ENCODE measurements at regions of chr13 and their contacts with region 1.

Region 1: DNA sequence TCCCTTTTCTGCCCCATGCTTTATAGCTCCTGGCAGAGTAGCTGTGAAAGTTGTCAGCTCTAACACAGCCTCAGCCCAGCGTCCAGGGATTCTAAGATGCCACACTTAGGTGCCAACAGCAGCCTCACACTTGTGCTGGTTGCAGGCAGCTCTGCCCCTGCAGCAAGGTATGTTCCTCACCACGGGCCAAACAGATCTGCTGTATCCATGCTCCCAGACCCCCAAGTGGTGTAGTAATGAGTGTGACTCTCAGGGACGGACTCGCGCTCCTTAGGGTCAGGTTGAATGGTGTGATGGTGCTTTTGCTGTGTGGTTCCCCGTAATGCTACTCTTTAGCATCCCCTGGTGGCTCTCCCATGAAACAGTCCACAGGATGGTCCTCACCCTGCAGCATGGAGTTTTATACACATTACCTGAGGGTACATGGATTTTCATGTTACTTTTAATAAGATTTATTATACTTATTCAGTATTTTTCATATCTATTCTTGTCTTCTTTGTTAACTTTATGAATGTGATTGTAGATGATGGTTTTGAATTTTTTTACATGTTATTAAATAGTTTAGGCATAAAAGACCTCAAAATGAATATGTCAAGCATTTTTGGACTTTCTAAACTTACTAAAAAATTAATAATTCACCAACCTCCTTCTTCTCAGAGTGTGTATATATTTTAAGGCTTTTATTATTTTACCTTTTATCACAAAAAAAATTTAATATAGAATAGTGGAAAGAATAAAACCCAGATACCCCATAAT is 232.5 kb downstream of the SLC7A1 start:
- DNase-seq: peak in 10 of 14 experiments; percentile 4 to 64 (median 14)
- ATAC-seq: peak; percentile 79
- H3K4me3 ChIP-seq: no peak overlapping the region
- H3K4me3 Mint-ChIP-seq: no peak overlapping the region
- H3K27ac ChIP-seq: no peak overlapping the region
- H3K27ac Mint-ChIP-seq: no peak overlapping the region
- H3K4me1 ChIP-seq: peaks cover 5% of the 10 kb centered on the region
- H3K4me1 Mint-ChIP-seq: no peaks in the 10 kb centered on the region
- H3K27me3 ChIP-seq: no peaks in the 10 kb centered on the region
- H3K27me3 Mint-ChIP-seq: peaks cover 22% of the 10 kb centered on the region
- CTCF ChIP-seq: peak; percentile 71

Region 2: DNA sequence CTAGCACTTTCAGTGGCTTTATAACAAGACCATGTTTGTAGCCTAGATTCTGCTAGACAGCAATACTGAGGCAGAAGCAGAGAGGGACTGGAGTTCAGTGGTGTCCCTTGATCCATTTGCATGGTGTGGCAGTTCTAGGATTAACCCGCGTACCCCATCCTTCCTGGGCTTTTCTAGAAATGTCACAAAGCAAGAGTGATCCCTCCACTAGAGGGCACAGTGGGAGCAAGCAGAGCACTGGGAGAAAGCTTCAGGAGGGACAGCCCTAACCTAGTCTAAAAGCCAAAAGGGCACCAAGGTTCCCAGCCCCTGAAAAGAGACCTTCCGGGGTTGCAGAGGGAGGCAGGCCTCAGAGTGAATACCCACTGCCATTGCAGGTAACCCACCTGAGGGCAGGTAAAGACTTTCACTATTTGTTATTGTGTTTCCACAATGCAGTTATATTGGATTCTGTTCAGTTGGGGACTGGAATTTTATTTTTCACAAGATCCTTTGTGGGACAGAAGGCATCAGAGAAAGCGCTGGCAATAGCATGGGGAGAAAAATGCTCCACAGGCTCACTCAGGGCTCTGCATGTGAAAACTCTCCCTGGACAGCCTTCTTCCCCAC is 1038.7 kb before region 1 on chr13:
- CTCF ChIA-PET with region 1: no interaction called
- POLR2A ChIA-PET with region 1: no interaction called
- intact Hi-C with region 1: loop called in 1 of 2 experiments (anchors 5 kb)
- DNase-seq: peak; percentile 14 to 71 (median 35)
- ATAC-seq: peak; percentile 61
- H3K4me3 ChIP-seq: no peak overlapping the region
- H3K4me3 Mint-ChIP-seq: no peak overlapping the region
- H3K27ac ChIP-seq: no peak overlapping the region
- H3K27ac Mint-ChIP-seq: no peak overlapping the region
- H3K4me1 ChIP-seq: no peaks in the 10 kb centered on the region
- H3K4me1 Mint-ChIP-seq: no peaks in the 10 kb centered on the region
- H3K27me3 ChIP-seq: no peaks in the 10 kb centered on the region
- H3K27me3 Mint-ChIP-seq: no peaks in the 10 kb centered on the region
- CTCF ChIP-seq: peak; percentile 64

Region 3: GRCh38 chr13:28819735-28820098 is 543.3 kb before region 1 on chr13:
- CTCF ChIA-PET with region 1: no interaction called
- POLR2A ChIA-PET with region 1: no interaction called
- intact Hi-C with region 1: loop called in 1 of 2 experiments (anchors 2 kb)
- DNase-seq: peak in 12 of 14 experiments; percentile 6 to 74 (median 36)
- ATAC-seq: peak; percentile 65
- H3K4me3 ChIP-seq: no peak overlapping the region
- H3K4me3 Mint-ChIP-seq: no peak overlapping the region
- H3K27ac ChIP-seq: no peak overlapping the region
- H3K27ac Mint-ChIP-seq: no peak overlapping the region
- H3K4me1 ChIP-seq: peaks cover 11% of the 10 kb centered on the region
- H3K4me1 Mint-ChIP-seq: peaks cover 4% of the 10 kb centered on the region
- H3K27me3 ChIP-seq: peaks cover 17 to 48% of the 10 kb centered on the region in 2 experiments
- H3K27me3 Mint-ChIP-seq: peaks cover 67% of the 10 kb centered on the region
- CTCF ChIP-seq: no peak

Region 4: DNA sequence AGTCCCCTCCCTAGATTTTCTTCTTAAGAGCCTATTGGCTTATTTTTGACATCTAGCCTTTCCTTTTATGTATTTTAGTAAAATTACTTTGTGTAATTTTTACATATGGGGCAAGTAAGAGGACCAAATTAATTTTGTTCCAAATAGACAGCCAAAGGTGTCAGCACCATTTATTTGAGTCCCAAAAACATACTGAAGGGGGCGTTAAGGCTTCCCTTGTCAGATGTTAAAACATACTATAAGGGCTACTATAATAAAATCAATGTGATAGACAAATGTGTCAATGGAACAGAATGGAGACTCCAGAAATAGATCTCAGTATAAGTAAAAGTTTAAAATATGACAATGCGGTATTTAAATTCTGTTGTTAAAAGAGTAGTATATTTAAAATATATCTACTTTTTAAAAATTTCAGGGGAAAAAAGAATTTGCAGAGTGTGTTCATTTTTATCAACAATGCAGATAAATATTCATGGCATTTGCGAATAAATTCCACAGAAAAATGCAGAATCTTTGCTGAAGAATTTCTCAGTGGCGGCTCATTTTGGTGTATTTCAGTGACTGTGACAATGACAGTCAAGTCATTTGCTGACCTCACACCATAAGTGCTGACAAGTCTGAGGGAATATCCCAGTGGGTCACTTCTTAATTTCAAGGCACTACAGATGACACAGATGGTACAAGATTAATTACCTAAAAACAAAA is 409.2 kb before region 1 on chr13:
- CTCF ChIA-PET with region 1: no interaction called
- POLR2A ChIA-PET with region 1: no interaction called
- intact Hi-C with region 1: loop called in 1 of 2 experiments (anchors 5 kb)
- DNase-seq: no peak
- ATAC-seq: no peak
- H3K4me3 ChIP-seq: no peak overlapping the region
- H3K4me3 Mint-ChIP-seq: no peak overlapping the region
- H3K27ac ChIP-seq: no peak overlapping the region
- H3K27ac Mint-ChIP-seq: no peak overlapping the region
- H3K4me1 ChIP-seq: no peaks in the 10 kb centered on the region
- H3K4me1 Mint-ChIP-seq: no peaks in the 10 kb centered on the region
- H3K27me3 ChIP-seq: no peaks in the 10 kb centered on the region
- H3K27me3 Mint-ChIP-seq: no peaks in the 10 kb centered on the region
- CTCF ChIP-seq: no peak

Region 5: GRCh38 chr13:29081036-29081435 is 282.0 kb before region 1 on chr13:
- CTCF ChIA-PET with region 1: no interaction called
- POLR2A ChIA-PET with region 1: no interaction called
- intact Hi-C with region 1: loop called in 1 of 2 experiments (anchors 5 kb)
- DNase-seq: peak in 9 of 14 experiments; percentile 1 to 78 (median 27)
- ATAC-seq: peak; percentile 83
- H3K4me3 ChIP-seq: no peak overlapping the region
- H3K4me3 Mint-ChIP-seq: no peak overlapping the region
- H3K27ac ChIP-seq: peak overlapping the region in 1 of 2 donors; percentile 34
- H3K27ac Mint-ChIP-seq: peak overlapping the region; percentile 50
- H3K4me1 ChIP-seq: peaks cover 15% of the 10 kb centered on the region
- H3K4me1 Mint-ChIP-seq: peaks cover 38% of the 10 kb centered on the region
- H3K27me3 ChIP-seq: no peaks in the 10 kb centered on the region
- H3K27me3 Mint-ChIP-seq: no peaks in the 10 kb centered on the region
- CTCF ChIP-seq: no peak

Region 6: GRCh38 chr13:29319451-29319850 is 43.6 kb before region 1 on chr13:
- CTCF ChIA-PET with region 1: no interaction called
- POLR2A ChIA-PET with region 1: no interaction called
- intact Hi-C with region 1: no loop called
- DNase-seq: no peak
- ATAC-seq: no peak
- H3K4me3 ChIP-seq: no peak overlapping the region
- H3K4me3 Mint-ChIP-seq: no peak overlapping the region
- H3K27ac ChIP-seq: no peak overlapping the region
- H3K27ac Mint-ChIP-seq: no peak overlapping the region
- H3K4me1 ChIP-seq: no peaks in the 10 kb centered on the region
- H3K4me1 Mint-ChIP-seq: no peaks in the 10 kb centered on the region
- H3K27me3 ChIP-seq: no peaks in the 10 kb centered on the region
- H3K27me3 Mint-ChIP-seq: peaks cover 12% of the 10 kb centered on the region
- CTCF ChIP-seq: no peak